Panc1 (cell line): ENCODE measurements at regions of chr1 and their contacts with region 1.

Region 1: GRCh38 chr1:147534386-147534785 is 6.9 kb upstream of the BCL9 start:
- DNase-seq: no peak
- ATAC-seq: no peak
- H3K4me3 ChIP-seq: no peak overlapping the region
- H3K27ac ChIP-seq: no peak overlapping the region
- H3K4me1 ChIP-seq: peaks cover 10% of the 10 kb centered on the region
- H3K27me3 ChIP-seq: peaks cover 2% of the 10 kb centered on the region; the same call in 1 of the 2 replicates
- CTCF ChIP-seq: no peak

Region 2: DNA sequence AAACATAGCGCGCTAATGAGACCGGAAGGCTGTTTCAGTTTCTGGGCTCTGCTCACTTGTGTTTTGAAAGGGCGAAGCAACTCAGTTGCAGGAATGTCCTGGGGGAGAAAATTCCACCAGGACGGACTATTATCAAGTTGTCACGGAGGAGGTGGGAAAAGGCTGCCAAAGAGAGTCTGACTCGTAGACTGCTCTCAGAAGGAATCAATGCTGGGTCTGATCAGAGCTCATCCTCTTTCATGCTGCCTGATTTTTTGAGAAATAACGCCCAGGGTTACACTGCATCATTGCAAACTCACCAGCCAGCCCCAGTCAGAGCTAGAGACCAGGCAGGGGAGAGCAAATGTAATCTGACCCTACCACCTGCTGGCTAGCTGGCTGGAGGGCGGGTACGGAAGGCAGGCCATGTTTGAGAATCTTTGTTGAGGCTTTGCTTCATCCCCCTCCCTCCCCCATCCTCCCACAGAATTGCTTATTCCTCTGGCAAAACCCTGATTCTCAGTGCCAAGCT is 29.5 kb before region 1 on chr1:
- CTCF ChIA-PET with region 1: interaction called, 12 read pairs
- POLR2A ChIA-PET with region 1: no interaction called
- in situ Hi-C with region 1: no loop called
- intact Hi-C with region 1: no loop called
- DNase-seq: no peak
- ATAC-seq: no peak
- H3K4me3 ChIP-seq: no peak overlapping the region
- H3K27ac ChIP-seq: no peak overlapping the region
- H3K4me1 ChIP-seq: no peaks in the 10 kb centered on the region
- H3K27me3 ChIP-seq: peaks cover 4% of the 10 kb centered on the region; the same call in 1 of the 2 replicates
- CTCF ChIP-seq: no peak